ENCODE measurements at regions of chr11 and their contacts with region 1.

Region 1: DNA sequence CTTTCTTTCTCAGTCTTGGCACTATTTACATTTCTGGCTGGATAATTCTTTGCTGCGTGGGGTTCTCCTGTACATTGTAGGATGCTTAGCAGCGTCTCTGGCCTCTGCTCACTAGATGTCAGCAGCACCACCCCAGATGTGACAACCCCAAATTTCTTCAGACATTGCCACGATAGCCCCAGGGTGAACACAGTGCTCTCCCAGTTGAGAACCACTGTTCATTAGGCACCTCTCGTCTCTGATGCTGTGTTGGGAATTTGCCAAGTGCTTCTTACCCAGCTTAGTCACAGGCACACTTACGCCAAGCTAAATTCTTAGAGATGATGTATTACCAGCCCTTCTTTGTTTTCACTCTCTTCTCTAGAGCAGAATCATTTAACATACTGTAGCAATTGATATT is 9.4 kb downstream of the TRIM6 start:
- DNase-seq: peak; percentile 87
- H3K4me3 Mint-ChIP-seq: no peak overlapping the region
- H3K27ac Mint-ChIP-seq: no peak overlapping the region
- H3K4me1 Mint-ChIP-seq: peaks cover 16% of the 10 kb centered on the region
- H3K27me3 Mint-ChIP-seq: no peaks in the 10 kb centered on the region
- CTCF ChIP-seq: peak; percentile 16

Region 2: DNA sequence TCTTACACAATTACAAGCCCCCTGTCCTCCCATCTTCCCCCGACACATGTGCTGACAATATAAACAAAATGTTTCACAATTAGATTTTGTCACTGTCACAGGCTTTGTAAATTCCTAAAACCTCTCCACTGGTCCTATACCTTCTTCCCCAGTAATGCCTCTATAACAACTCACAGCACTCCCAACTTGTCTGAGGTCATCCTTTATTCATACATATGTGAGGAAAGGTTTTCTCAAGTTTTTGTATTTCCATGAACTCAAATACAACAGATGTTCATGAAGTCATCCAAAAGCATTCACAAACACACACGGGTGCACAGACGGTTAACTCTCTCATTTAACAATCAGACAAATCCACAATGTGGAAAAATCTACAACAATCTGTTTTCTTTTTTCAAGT is 59.4 kb before region 1 on chr11:
- CTCF ChIA-PET with region 1: no interaction called
- POLR2A ChIA-PET with region 1: no interaction called
- intact Hi-C with region 1: no loop called
- DNase-seq: no peak
- H3K4me3 Mint-ChIP-seq: no peak overlapping the region
- H3K27ac Mint-ChIP-seq: no peak overlapping the region
- H3K4me1 Mint-ChIP-seq: peaks cover 13% of the 10 kb centered on the region
- H3K27me3 Mint-ChIP-seq: no peaks in the 10 kb centered on the region
- CTCF ChIP-seq: no peak

Region 3: GRCh38 chr11:5574654-5575053 is 31.2 kb before region 1 on chr11:
- CTCF ChIA-PET with region 1: no interaction called
- POLR2A ChIA-PET with region 1: no interaction called
- intact Hi-C with region 1: no loop called
- DNase-seq: no peak
- H3K4me3 Mint-ChIP-seq: no peak overlapping the region
- H3K27ac Mint-ChIP-seq: no peak overlapping the region
- H3K4me1 Mint-ChIP-seq: no peaks in the 10 kb centered on the region
- H3K27me3 Mint-ChIP-seq: no peaks in the 10 kb centered on the region
- CTCF ChIP-seq: no peak

Region 4: DNA sequence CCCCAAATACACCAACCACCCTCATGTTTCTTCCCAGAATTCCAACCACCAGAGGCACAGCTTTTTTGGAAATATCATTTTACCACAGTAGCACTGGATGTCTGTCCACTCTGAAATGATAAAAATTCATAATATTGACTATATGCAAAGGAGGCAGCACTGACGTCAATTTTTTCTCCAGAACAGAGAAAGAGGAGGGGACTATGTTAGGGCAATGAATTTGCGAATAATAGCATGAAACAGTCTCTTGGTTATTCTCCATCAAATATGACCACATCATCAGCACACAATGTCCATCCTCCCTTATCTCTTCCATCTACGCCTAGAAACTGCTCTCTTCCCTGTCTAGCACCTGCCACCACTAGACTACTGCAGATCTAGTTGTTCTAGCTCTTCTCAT is 40.3 kb after region 1 on chr11:
- CTCF ChIA-PET with region 1: no interaction called
- POLR2A ChIA-PET with region 1: no interaction called
- intact Hi-C with region 1: no loop called
- DNase-seq: no peak
- H3K4me3 Mint-ChIP-seq: no peak overlapping the region
- H3K27ac Mint-ChIP-seq: no peak overlapping the region
- H3K4me1 Mint-ChIP-seq: no peaks in the 10 kb centered on the region
- H3K27me3 Mint-ChIP-seq: no peaks in the 10 kb centered on the region
- CTCF ChIP-seq: no peak

Region 5: DNA sequence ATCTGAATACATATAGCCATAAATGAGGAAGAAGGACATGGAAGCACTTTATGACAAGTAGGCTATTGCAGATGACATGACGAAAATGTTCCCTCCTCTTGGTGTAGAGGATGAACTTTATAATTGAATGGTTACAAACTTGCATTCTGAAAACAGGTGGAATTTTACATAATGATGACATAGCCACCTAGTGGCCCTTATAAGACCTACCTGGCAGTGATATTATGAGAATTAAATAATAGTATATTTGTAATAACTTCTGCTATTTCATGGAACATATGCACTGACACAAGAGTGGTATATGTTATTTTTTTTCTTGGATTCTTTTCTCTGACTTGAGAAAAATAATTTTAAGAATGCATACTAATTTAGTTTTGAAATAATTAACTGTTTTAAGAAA is 106.7 kb after region 1 on chr11:
- CTCF ChIA-PET with region 1: interaction called, 35 read pairs
- POLR2A ChIA-PET with region 1: no interaction called
- intact Hi-C with region 1: loop called (anchors 1 kb)
- DNase-seq: peak; percentile 24
- H3K4me3 Mint-ChIP-seq: no peak overlapping the region
- H3K27ac Mint-ChIP-seq: no peak overlapping the region
- H3K4me1 Mint-ChIP-seq: no peaks in the 10 kb centered on the region
- H3K27me3 Mint-ChIP-seq: no peaks in the 10 kb centered on the region
- CTCF ChIP-seq: peak; percentile 37

Region 6: GRCh38 chr11:5737091-5737490 is 131.2 kb after region 1 on chr11:
- CTCF ChIA-PET with region 1: no interaction called
- POLR2A ChIA-PET with region 1: no interaction called
- intact Hi-C with region 1: no loop called
- DNase-seq: peak; percentile 19
- H3K4me3 Mint-ChIP-seq: no peak overlapping the region
- H3K27ac Mint-ChIP-seq: no peak overlapping the region
- H3K4me1 Mint-ChIP-seq: no peaks in the 10 kb centered on the region
- H3K27me3 Mint-ChIP-seq: peaks cover 56% of the 10 kb centered on the region
- CTCF ChIP-seq: no peak

Measured in MCF 10A (cell line).